ENCODE measurements at regions of chr12 and their contacts with region 1.

Region 1: DNA sequence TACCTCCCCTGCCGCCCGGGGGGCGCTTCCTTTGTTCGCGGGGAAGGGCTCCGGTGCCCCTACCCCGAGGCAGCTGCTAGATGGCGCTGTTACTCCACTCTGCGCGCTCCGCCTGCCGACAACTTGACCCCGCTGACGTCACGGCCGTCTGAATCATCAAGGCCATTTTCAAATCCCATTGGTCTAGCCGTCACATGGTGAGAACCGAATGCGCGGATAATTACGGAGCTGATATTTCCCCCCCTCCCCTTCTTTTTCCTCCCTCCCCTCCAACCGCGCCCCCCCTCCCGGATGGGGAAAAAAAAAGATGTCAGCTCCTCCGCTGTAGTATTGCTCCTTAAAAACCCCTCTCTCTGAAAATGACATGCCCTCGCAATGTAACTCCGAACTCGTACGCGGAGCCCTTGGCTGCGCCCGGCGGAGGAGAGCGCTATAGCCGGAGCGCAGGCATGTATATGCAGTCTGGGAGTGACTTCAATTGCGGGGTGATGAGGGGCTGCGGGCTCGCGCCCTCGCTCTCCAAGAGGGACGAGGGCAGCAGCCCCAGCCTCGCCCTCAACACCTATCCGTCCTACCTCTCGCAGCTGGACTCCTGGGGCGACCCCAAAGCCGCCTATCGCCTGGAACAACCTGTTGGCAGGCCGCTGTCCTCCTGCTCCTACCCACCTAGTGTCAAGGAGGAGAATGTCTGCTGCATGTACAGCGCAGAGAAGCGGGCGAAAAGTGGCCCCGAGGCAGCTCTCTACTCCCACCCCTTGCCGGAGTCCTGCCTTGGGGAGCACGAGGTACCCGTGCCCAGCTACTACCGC is at the start of gene HOXC10:
- DNase-seq: peak; percentile 89 to 90 (median 90)
- H3K4me3 ChIP-seq: peak within 1 kb of the TSS in 1 of 7 experiments; percentile 32
- H3K27ac ChIP-seq: no peak within 1 kb of the TSS
- H3K4me1 ChIP-seq: peaks cover 0 to 25% (median 19%) of the 10 kb centered on the region in 4 experiments
- H3K27me3 ChIP-seq: peaks cover 39 to 99% (median 74%) of the 10 kb centered on the region in 5 experiments

Region 2: DNA sequence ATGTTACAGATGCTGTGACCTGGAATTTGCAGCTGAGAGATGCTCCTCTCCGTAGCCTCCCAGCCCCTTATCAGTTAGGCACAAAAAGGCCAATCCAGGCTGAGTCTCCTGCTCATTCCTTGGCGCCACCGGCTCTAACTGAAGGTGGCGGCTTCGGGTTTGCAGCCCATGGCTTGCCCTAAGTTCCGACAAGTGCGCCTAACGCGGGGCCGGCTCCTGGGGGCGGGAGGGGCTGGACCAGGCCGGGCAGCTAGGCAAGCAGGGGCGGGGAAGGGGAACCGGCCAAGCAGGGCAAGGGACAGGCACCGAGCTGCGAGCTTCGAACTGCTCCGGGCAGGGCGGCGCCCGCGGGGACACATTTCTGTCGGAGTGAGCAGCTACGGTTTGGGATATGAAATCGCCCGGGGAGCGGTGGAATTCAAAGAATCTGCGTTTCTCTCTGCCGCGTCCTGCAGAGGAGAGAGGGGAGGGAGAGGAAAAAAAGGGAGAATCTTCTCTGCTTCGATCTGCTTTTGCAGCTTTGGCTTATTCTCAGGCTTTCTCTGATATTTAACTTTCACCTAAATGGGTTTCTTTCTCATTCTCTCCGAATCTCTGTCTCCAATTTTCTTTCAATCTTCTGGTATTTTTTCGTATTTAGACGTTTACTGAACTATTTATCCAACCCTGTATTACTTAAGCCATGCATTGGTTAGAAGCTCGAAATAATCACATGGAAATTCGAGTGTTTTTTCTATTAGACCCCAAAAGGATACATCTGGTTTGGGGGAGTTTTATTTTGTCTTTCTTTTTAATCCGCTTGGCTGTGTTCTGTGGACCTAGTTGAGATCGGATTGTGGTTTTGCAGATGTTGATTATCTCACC is 32.0 kb before region 1 on chr12:
- CTCF ChIA-PET with region 1: interaction called, 10 read pairs
- POLR2A ChIA-PET with region 1: interaction called, 3 read pairs
- DNase-seq: no peak
- H3K4me3 ChIP-seq: no peak overlapping the region
- H3K27ac ChIP-seq: no peak overlapping the region
- H3K4me1 ChIP-seq: peaks cover 0 to 21% (median 18%) of the 10 kb centered on the region in 4 experiments
- H3K27me3 ChIP-seq: peaks cover 6 to 100% (median 82%) of the 10 kb centered on the region in 5 experiments

Region 3: GRCh38 chr12:53995378-53996239 is 10.5 kb after region 1 on chr12:
- CTCF ChIA-PET with region 1: interaction called, 46 read pairs
- POLR2A ChIA-PET with region 1: interaction called, 3 read pairs
- DNase-seq: peak in 2 of 3 donors; percentile 45 to 48
- H3K4me3 ChIP-seq: peak overlapping the region in 6 of 7 experiments; percentile 16 to 72 (median 36)
- H3K27ac ChIP-seq: peak overlapping the region in 1 of 2 experiments; percentile 70
- H3K4me1 ChIP-seq: peaks cover 0 to 29% (median 16%) of the 10 kb centered on the region in 4 experiments
- H3K27me3 ChIP-seq: peaks cover 10 to 100% (median 66%) of the 10 kb centered on the region in 5 experiments

Region 4: DNA sequence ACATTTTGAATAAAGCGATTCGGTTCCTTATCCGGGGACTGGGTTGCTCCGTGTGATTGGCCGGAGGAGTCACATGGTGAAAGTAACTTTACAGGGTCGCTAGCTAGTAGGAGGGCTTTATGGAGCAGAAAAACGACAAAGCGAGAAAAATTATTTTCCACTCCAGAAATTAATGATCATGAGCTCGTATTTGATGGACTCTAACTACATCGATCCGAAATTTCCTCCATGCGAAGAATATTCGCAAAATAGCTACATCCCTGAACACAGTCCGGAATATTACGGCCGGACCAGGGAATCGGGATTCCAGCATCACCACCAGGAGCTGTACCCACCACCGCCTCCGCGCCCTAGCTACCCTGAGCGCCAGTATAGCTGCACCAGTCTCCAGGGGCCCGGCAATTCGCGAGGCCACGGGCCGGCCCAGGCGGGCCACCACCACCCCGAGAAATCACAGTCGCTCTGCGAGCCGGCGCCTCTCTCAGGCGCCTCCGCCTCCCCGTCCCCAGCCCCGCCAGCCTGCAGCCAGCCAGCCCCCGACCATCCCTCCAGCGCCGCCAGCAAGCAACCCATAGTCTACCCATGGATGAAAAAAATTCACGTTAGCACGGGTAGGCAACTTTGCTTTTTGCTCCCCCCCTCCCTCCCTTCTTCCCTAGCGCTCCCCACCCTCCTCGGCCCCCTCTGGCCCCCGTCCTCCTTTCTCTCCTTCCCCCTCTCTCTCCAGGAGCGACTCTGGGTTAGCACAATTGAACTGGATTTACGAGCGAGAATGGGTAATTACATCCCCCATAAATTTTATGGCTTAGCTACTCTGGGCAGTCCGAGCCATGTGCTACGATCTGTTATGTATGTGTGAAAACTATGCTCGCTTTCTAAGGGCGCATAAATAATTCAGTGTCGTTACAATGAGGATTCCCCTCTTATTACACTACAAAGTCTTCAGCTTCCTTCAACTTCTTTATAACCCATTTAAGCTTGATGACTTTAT is 68.9 kb after region 1 on chr12 and contains the start of gene HOXC4:
- CTCF ChIA-PET with region 1: no interaction called
- POLR2A ChIA-PET with region 1: no interaction called
- DNase-seq: peak in 2 of 3 donors; percentile 34 to 69
- H3K4me3 ChIP-seq: peak within 1 kb of the TSS in 6 of 7 experiments; percentile 20 to 67 (median 54)
- H3K27ac ChIP-seq: no peak within 1 kb of the TSS
- H3K4me1 ChIP-seq: peaks cover 0 to 19% (median 9%) of the 10 kb centered on the region in 4 experiments
- H3K27me3 ChIP-seq: peaks cover 12 to 99% (median 73%) of the 10 kb centered on the region in 5 experiments

Measured in common myeloid progenitor, CD34-positive (primary cell).